ENCODE measurements at regions of chr6 and their contacts with region 1.

Region 1: DNA sequence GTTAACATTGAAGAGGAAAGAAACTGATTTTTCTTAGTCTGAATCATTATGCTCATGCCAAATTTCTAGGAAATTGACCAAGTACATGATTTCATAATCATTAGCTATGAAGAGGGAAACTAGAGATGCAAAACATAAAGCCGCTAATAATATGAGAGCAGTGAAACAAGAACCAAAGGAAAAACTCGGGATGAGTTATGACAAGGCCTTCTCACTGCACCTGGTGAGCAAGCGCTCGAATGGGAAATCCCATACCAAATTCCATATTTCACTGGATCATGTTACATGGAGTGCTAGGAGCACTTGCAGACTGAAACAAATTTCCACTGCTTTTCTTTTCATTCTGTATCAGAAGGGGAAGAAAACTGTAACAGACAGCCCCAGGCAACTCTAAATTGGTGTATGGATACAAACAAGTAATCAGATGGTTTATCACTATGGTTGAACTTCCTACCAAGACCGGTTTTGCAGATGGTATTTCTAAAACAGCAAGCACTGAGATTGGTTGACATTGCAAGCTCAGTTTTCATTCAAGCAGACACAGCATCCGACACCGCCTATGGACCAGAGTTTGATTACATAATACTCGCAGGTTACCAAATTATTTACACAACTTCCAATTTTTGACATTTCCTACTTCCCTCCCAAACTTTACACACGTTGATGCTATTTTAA is 210.1 kb downstream of the ALDH8A1 start:
- DNase-seq: no peak
- H3K4me3 ChIP-seq: no peak overlapping the region
- H3K27ac ChIP-seq: peak overlapping the region in 37 of 59 donors; percentile 2 to 77 (median 46)
- H3K27me3 ChIP-seq: no peaks in the 10 kb centered on the region
- CTCF ChIP-seq: no peak

Region 2: DNA sequence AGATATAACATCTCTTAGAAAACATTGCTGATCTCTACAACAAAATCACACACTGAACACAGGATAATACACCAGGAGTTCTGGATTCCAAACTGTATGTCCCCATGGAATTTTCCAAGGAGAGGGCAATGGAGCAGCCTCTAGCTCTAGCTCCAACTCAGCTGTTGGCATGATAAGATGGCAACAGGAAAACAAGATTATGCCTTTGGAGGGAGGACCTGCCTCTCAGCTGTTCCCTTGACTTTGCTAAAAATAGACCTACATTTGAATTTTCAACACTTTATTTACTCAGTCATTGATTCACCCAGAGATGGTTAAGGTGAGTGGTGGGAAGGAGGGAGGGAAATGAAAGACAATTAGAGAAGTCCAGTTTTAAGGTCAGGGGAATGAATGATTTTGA is 36.6 kb before region 1 on chr6:
- intact Hi-C with region 1: loop called in 1 of 2 experiments (anchors 5 kb)
- DNase-seq: no peak
- H3K4me3 ChIP-seq: no peak overlapping the region
- H3K27ac ChIP-seq: no peak overlapping the region
- H3K27me3 ChIP-seq: no peaks in the 10 kb centered on the region
- CTCF ChIP-seq: no peak